ENCODE measurements at regions of chr4 and their contacts with region 1.

Region 1: DNA sequence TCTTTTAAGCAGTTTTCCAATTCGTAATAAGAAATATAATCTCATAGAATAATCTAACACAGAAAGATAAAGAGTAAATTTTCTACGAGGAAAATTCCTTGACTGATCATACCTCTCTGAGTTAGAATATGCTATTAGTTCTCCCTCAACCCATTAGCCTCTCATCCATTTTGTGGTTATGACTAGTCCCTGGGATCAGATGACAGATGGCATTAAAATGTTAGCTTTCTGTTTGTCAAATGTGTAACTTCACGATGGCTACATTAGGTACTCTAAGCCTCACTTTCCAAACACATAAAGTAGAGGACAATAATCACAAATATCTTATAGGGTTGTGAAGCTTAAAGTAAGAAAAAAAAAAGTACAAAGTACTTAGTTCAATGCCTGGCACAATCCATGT is 112.2 kb downstream of the ZAR1 start:
- DNase-seq: peak; percentile 80
- H3K4me3 ChIP-seq: 0 out of 2 replicates have a peak overlapping the region, but pooled peaks have one; percentile 1
- H3K27ac ChIP-seq: peak overlapping the region; percentile 16
- H3K4me1 ChIP-seq: peaks cover 14% of the 10 kb centered on the region
- H3K27me3 ChIP-seq: no peaks in the 10 kb centered on the region

Region 2: DNA sequence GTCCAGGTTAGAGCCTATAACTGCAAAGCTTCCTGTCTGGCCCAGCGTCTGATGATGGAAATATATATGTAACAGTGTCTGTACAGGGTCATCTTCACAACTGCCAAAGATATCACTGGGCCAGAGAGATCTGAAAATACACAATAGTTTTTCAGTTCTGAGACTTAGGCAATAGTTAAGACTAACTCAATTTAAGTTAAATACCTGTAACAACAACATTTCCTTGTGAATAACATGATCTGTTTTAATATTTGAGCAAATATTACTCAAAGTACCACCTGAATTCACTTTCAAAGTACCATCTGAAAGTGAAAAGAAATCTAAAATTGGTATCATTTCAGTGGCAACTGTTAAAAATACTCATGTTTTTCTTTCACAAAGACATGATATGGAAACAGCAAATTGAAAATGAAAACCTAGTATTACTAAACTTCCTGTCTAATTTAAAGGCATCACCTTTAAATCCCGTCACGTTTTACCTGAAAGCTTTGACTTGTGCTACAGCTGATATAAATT is 102.6 kb before region 1 on chr4:
- in situ Hi-C with region 1: loop called (anchors 25 kb)
- DNase-seq: no peak
- H3K4me3 ChIP-seq: no peak overlapping the region
- H3K27ac ChIP-seq: no peak overlapping the region
- H3K4me1 ChIP-seq: no peaks in the 10 kb centered on the region
- H3K27me3 ChIP-seq: no peaks in the 10 kb centered on the region

Region 3: DNA sequence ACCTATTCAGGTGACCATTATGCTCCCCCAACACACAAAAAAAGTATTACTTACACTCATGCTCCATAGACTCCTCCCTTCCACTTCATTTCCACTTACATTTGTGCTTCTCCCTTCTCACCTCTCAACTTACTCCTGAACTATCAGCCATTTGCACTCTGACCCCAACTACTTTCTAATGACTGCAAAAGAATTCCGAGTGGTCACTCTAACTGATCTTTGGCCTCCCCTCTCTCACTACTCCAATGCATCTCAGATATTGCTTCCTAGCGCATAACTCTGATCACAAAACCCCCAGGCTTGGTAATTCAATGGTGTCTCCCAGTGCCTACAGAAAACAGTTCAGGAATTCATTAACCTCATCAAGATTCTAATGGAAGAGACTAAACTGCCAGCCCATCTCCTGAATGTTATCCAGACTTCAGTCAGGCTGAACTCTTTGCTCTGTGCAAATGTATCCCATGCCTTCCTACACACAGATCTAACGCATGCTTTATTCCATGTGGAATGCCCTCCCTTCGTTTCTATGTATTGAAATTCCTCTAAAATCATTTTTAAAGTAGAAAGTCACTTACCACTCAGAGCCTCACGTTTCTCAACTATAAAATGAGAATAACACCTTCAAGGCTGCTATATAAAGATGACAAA is 116.7 kb after region 1 on chr4:
- in situ Hi-C with region 1: no loop called
- DNase-seq: no peak
- H3K4me3 ChIP-seq: no peak overlapping the region
- H3K27ac ChIP-seq: no peak overlapping the region
- H3K4me1 ChIP-seq: peaks cover 10% of the 10 kb centered on the region
- H3K27me3 ChIP-seq: no peaks in the 10 kb centered on the region

Measured in GM23248 (cell line).